Gastrocnemius medialis (tissue), 4 donors: ENCODE measurements at regions of chr6 and their contacts with region 1.

Region 1: GRCh38 chr6:129730477-129731165 is 20.6 kb upstream of the ARHGAP18 start:
- DNase-seq: no peak
- ATAC-seq: peak; percentile 48 to 72
- H3K4me3 ChIP-seq: no peak overlapping the region
- H3K27ac ChIP-seq: no peak overlapping the region
- H3K4me1 ChIP-seq: peaks cover 11 to 22% of the 10 kb centered on the region in 2 donors
- H3K27me3 ChIP-seq: no peaks in the 10 kb centered on the region
- CTCF ChIP-seq: peak; percentile 67 to 76 (median 70)
- POLR2A ChIP-seq: no peak

Region 2: GRCh38 chr6:129590408-129591022 is 140.1 kb before region 1 on chr6:
- in situ Hi-C with region 1: loop called in 3 of 4 experiments (anchors 5 kb)
- intact Hi-C with region 1: no loop called
- DNase-seq: no peak
- ATAC-seq: no peak
- H3K4me3 ChIP-seq: no peak overlapping the region
- H3K27ac ChIP-seq: no peak overlapping the region
- H3K4me1 ChIP-seq: no peaks in the 10 kb centered on the region
- H3K27me3 ChIP-seq: no peaks in the 10 kb centered on the region
- CTCF ChIP-seq: no peak
- POLR2A ChIP-seq: no peak

Region 3: DNA sequence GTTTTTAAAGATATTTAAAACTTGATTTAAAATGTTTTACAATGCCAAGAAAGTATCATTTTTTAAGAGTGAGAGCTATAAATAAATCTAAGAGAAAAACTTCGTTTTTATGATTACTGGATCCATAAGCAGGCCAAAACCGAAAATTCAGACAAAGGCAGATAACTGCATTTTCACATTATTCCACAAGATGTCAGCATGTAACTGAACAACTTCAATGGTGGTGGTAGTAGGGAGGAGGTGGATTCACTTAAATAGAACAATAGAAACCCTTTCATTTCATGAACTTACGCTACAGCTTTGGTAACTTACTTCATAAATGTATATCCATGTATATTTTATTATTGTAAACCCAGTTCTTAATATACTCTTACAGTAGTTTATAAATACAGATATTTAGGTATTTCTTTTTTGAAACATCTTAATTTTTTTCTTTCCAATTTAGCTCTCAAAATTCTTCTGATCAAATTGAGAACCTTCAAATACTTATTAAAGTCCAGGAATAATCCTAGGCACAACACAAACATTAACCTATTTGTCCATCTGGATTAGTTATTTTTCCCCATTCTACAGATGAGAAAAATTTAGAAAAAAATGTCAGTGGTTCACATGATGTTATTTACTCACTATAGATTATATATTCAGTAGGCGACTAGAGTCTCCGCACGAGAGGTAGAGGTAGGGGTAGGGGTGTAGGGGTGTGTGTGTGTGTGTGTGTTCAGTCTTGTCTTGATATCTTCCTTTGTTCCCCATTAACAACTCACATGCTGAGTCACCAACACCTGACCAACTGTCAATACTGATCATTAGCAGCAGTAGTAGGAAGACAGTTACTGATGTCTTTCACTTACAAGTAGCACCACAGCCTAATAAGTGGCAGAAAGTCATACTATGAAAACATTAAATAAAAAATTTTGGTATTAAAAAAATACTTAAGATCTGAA is 132.1 kb before region 1 on chr6:
- in situ Hi-C with region 1: loop called in 3 of 4 experiments (anchors 5 kb)
- intact Hi-C with region 1: loop called (anchors 1 kb)
- DNase-seq: no peak
- ATAC-seq: peak; percentile 74 to 91
- H3K4me3 ChIP-seq: no peak overlapping the region
- H3K27ac ChIP-seq: peak overlapping the region in 1 of 4 donors; percentile 25
- H3K4me1 ChIP-seq: peaks cover 3 to 6% of the 10 kb centered on the region in 2 donors
- H3K27me3 ChIP-seq: no peaks in the 10 kb centered on the region
- CTCF ChIP-seq: peak; percentile 63 to 90 (median 84)
- POLR2A ChIP-seq: no peak

Region 4: GRCh38 chr6:129621247-129621646 is 109.4 kb before region 1 on chr6:
- in situ Hi-C with region 1: no loop called
- intact Hi-C with region 1: loop called (anchors 2 kb)
- DNase-seq: no peak
- ATAC-seq: no peak
- H3K4me3 ChIP-seq: no peak overlapping the region
- H3K27ac ChIP-seq: no peak overlapping the region
- H3K4me1 ChIP-seq: no peaks in the 10 kb centered on the region
- H3K27me3 ChIP-seq: no peaks in the 10 kb centered on the region
- CTCF ChIP-seq: peak; percentile 18 to 65 (median 52)
- POLR2A ChIP-seq: no peak

Region 5: DNA sequence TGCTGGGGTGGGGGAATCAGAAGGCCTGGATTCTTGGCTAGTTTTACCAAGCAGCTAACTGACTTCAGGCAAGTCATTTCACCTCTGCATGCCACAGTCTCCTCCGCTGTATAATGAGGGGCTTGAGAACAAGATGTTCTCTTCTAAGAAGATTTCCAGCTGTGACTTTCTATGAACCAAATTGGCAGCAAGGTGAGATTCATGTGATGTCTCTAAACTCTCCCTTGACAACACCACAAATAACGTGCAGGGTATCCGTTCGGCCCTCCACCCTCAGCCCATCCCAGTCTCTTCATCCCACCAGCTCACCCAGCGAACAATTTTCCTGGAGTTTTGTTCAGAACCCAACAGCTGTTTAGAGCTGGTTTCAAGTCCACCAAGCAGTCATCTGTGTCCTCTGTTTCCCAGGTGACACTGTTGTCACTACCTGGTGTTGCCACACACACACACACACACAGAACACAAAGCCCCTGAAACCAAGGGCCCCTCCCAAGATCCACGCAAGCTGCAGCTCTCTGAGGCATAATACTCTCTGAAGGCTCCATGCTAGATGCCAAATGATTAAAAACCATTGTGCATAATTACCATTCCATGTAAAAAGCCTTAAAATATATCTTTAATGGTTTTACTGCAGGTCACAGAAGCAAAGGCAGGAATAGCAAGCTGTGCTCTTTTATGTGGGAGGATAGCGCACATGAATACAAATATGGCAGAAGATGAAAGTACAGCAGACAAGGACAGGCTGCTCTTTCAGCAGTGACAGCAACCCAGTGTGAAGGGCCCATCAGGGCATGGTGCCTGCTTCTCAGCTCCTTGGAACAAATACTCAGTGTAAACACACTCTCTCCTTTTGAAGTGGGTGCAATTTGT is 68.8 kb before region 1 on chr6:
- in situ Hi-C with region 1: no loop called
- intact Hi-C with region 1: loop called (anchors 5 kb)
- DNase-seq: no peak
- ATAC-seq: peak; percentile 65 to 80
- H3K4me3 ChIP-seq: no peak overlapping the region
- H3K27ac ChIP-seq: peak overlapping the region in 2 of 4 donors; percentile 61 to 68
- H3K4me1 ChIP-seq: peaks cover 31 to 40% of the 10 kb centered on the region in 2 donors
- H3K27me3 ChIP-seq: no peaks in the 10 kb centered on the region
- CTCF ChIP-seq: no peak
- POLR2A ChIP-seq: no peak

Region 6: GRCh38 chr6:129957941-129958898 is 227.6 kb after region 1 on chr6:
- in situ Hi-C with region 1: no loop called
- intact Hi-C with region 1: no loop called
- DNase-seq: no peak
- ATAC-seq: no peak
- H3K4me3 ChIP-seq: no peak overlapping the region
- H3K27ac ChIP-seq: no peak overlapping the region
- H3K4me1 ChIP-seq: no peaks in the 10 kb centered on the region
- H3K27me3 ChIP-seq: no peaks in the 10 kb centered on the region
- CTCF ChIP-seq: no peak
- POLR2A ChIP-seq: no peak